ENCODE measurements at regions of chr5 and their contacts with region 1.

Region 1: GRCh38 chr5:35926389-35927051 is 11.9 kb downstream of the CAPSL start:
- DNase-seq: peak in 1 of 2 donors; percentile 43
- ATAC-seq: peak; percentile 56 to 78 (median 72)
- H3K4me3 ChIP-seq: no peak overlapping the region
- H3K27ac ChIP-seq: no peak overlapping the region
- H3K4me1 ChIP-seq: peaks cover 0 to 18% (median 0%) of the 10 kb centered on the region in 9 donors
- H3K27me3 ChIP-seq: peaks cover 0 to 84% (median 39%) of the 10 kb centered on the region in 7 donors
- CTCF ChIP-seq: peak; percentile 65 to 92 (median 83)

Region 2: GRCh38 chr5:34957857-34958690 is 968.4 kb before region 1 on chr5:
- intact Hi-C with region 1: loop called in 1 of 10 experiments (anchors 10 kb)
- DNase-seq: no peak
- ATAC-seq: peak in 2 of 8 donors; percentile 37 to 49
- H3K4me3 ChIP-seq: no peak overlapping the region
- H3K27ac ChIP-seq: no peak overlapping the region
- H3K4me1 ChIP-seq: no peaks in the 10 kb centered on the region
- H3K27me3 ChIP-seq: no peaks in the 10 kb centered on the region
- CTCF ChIP-seq: peak in 8 of 9 donors; percentile 14 to 65 (median 50)

Region 3: GRCh38 chr5:35617435-35618303 is 308.9 kb before region 1 on chr5 and contains the start of gene SPEF2:
- intact Hi-C with region 1: loop called in 8 of 10 experiments (anchors 2 to 10 kb)
- DNase-seq: peak; percentile 77 to 83
- ATAC-seq: peak; percentile 97 to 99 (median 98)
- H3K4me3 ChIP-seq: peak within 1 kb of the TSS; percentile 67 to 90 (median 79)
- H3K27ac ChIP-seq: peak within 1 kb of the TSS in 2 of 10 donors; percentile 42 to 49
- H3K4me1 ChIP-seq: peaks cover 0 to 19% (median 9%) of the 10 kb centered on the region in 9 donors
- H3K27me3 ChIP-seq: no peaks in the 10 kb centered on the region
- CTCF ChIP-seq: peak; percentile 31 to 89 (median 71)
- total RNA-seq, gene SPEF2: 0.55 to 3.2 (median 1.9) TPM

Region 4: GRCh38 chr5:35651002-35651756 is 275.3 kb before region 1 on chr5:
- intact Hi-C with region 1: loop called in 6 of 10 experiments (anchors 2 to 10 kb)
- DNase-seq: no peak
- ATAC-seq: no peak
- H3K4me3 ChIP-seq: no peak overlapping the region
- H3K27ac ChIP-seq: no peak overlapping the region
- H3K4me1 ChIP-seq: no peaks in the 10 kb centered on the region
- H3K27me3 ChIP-seq: no peaks in the 10 kb centered on the region
- CTCF ChIP-seq: peak in 7 of 9 donors; percentile 29 to 59 (median 33)

Region 5: DNA sequence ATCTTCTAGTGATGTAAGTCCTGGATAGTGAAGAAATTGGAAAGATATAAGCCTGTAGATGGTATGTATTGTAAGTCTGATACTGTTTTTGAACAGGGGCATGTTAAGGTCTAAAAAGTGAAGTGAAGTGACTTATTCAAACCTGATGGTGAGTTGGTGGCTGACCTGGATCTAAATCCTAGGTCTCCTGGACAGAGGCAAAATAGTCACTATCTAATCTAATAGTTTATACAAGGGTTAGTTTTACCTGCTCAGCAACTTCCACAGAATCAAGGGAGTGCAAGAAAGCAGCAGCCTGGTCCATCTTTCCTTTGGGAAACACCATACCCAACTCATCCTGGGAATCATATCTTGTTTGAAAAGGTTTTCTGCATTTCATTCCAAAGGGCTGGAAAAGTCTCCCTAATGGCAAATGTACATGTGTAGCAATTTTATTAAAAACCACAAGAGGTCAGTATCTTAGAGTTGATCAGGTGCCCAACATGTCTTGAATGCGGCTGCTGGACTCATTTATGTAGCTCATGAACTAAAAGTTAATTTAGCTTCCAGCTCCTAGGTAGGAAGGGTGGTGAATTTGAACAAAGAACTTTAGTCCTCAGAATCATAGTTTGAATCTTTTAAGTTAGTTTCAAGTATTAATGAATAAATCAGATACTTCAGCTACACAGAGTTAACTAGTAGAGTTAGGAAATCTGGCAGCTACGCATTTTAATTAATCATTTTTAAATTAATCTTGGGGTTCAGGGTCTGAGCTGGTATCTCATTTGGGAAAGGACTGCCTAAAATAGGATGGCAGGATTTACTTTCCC is 251.4 kb after region 1 on chr5:
- intact Hi-C with region 1: no loop called
- DNase-seq: no peak
- ATAC-seq: peak in 3 of 8 donors; percentile 49 to 57 (median 56)
- H3K4me3 ChIP-seq: no peak overlapping the region
- H3K27ac ChIP-seq: no peak overlapping the region
- H3K4me1 ChIP-seq: no peaks in the 10 kb centered on the region
- H3K27me3 ChIP-seq: no peaks in the 10 kb centered on the region
- CTCF ChIP-seq: peak; percentile 27 to 69 (median 59)